CD4-positive, alpha-beta memory T cell (primary cell): ENCODE measurements at regions of chr4 and their contacts with region 1.

Region 1: GRCh38 chr4:108118490-108118889 is 50.2 kb downstream of the LEF1 start:
- DNase-seq: peak in 3 of 5 donors; percentile 23 to 83 (median 48)
- H3K4me3 ChIP-seq: no peak overlapping the region
- H3K4me3 Mint-ChIP-seq: peak overlapping the region in 7 of 8 donors; percentile 11 to 79 (median 75)
- H3K27ac ChIP-seq: peak overlapping the region; percentile 47
- H3K27ac Mint-ChIP-seq: peak overlapping the region; percentile 61 to 94 (median 87)
- H3K4me1 ChIP-seq: peaks cover 100% of the 10 kb centered on the region
- H3K4me1 Mint-ChIP-seq: peaks cover 77 to 93% (median 87%) of the 10 kb centered on the region in 4 donors
- H3K27me3 ChIP-seq: no peaks in the 10 kb centered on the region
- H3K27me3 Mint-ChIP-seq: no peaks in the 10 kb centered on the region

Region 2: DNA sequence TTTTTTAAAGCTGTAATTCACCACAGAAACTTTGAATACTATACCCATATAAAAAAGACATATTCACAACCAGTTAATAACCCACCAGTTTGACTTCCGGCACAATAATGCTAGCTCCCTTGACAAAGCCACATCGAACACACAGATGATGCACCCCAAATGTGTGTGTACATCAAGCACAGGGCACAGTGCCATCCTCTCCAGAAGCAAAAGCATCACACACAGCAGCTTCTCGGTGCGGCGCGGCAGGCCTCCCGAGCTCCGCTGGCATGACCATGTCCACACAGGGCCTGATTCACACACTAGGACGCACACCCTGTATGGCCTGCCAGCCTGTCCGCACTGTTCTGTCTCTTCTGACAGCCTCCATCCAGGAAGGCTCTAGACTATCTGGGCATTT is 37.7 kb before region 1 on chr4:
- CTCF ChIA-PET with region 1: no interaction called
- POLR2A ChIA-PET with region 1: interaction called, 3 read pairs
- intact Hi-C with region 1: loop called (anchors 5 kb)
- DNase-seq: peak; percentile 39 to 62 (median 48)
- H3K4me3 ChIP-seq: no peak overlapping the region
- H3K4me3 Mint-ChIP-seq: peak overlapping the region; percentile 61 to 83 (median 78)
- H3K27ac ChIP-seq: peak overlapping the region; percentile 23
- H3K27ac Mint-ChIP-seq: peak overlapping the region; percentile 82 to 94 (median 91)
- H3K4me1 ChIP-seq: peaks cover 35% of the 10 kb centered on the region
- H3K4me1 Mint-ChIP-seq: peaks cover 28 to 54% (median 45%) of the 10 kb centered on the region in 4 donors
- H3K27me3 ChIP-seq: no peaks in the 10 kb centered on the region
- H3K27me3 Mint-ChIP-seq: no peaks in the 10 kb centered on the region

Region 3: DNA sequence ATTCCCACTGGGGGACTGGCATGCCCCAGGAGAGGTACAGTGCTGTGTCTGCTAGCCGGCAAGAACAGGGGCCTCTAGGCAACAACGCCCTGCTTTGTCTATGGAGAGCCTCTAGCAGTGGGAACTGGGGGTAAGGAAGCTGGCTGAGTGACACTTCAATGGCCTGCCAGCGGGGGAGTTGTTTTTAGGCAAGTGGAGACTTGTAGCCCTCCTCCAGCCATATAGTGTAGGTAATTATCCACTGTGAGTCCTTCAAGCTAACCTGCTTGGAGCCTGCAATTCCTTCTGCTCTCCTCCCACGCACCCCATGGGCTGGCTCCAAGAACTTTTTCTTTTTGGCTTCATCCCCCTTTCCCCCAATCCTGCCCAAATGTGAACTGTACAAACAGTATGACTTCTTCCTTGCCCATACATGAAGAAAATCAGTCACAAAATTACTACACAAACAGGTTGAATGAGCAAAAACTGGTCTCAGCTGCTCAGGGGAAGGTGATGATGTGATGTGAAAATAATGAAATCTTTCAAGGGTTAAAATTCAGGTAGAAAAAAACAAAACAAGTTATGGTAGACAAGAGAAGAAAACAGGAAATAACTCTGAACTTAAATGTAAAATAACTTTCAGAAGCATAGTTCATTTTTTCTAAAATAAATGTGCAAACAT is 17.2 kb after region 1 on chr4:
- CTCF ChIA-PET with region 1: interaction called, 13 read pairs
- POLR2A ChIA-PET with region 1: interaction called, 159 read pairs
- intact Hi-C with region 1: loop called (anchors 2 kb)
- DNase-seq: no peak
- H3K4me3 ChIP-seq: peak overlapping the region in 1 of 2 donors; percentile 13
- H3K4me3 Mint-ChIP-seq: peak overlapping the region; percentile 38 to 82 (median 62)
- H3K27ac ChIP-seq: no peak overlapping the region
- H3K27ac Mint-ChIP-seq: peak overlapping the region; percentile 37 to 86 (median 75)
- H3K4me1 ChIP-seq: peaks cover 97% of the 10 kb centered on the region
- H3K4me1 Mint-ChIP-seq: peaks cover 54 to 91% (median 70%) of the 10 kb centered on the region in 4 donors
- H3K27me3 ChIP-seq: no peaks in the 10 kb centered on the region
- H3K27me3 Mint-ChIP-seq: no peaks in the 10 kb centered on the region

Region 4: GRCh38 chr4:108141213-108141950 is 22.9 kb after region 1 on chr4:
- CTCF ChIA-PET with region 1: interaction called, 3 read pairs
- POLR2A ChIA-PET with region 1: interaction called, 159 read pairs
- intact Hi-C with region 1: loop called (anchors 2 kb)
- DNase-seq: no peak
- H3K4me3 ChIP-seq: no peak overlapping the region
- H3K4me3 Mint-ChIP-seq: peak overlapping the region; percentile 32 to 84 (median 66)
- H3K27ac ChIP-seq: peak overlapping the region; percentile 6
- H3K27ac Mint-ChIP-seq: peak overlapping the region; percentile 44 to 87 (median 83)
- H3K4me1 ChIP-seq: peaks cover 100% of the 10 kb centered on the region
- H3K4me1 Mint-ChIP-seq: peaks cover 73 to 95% (median 82%) of the 10 kb centered on the region in 4 donors
- H3K27me3 ChIP-seq: no peaks in the 10 kb centered on the region
- H3K27me3 Mint-ChIP-seq: peaks cover 0 to 1% of the 10 kb centered on the region in 2 donors

Region 5: GRCh38 chr4:108160741-108161352 is 42.4 kb after region 1 on chr4:
- CTCF ChIA-PET with region 1: interaction called, 64 read pairs
- POLR2A ChIA-PET with region 1: interaction called, 460 read pairs
- intact Hi-C with region 1: loop called (anchors 1 kb)
- DNase-seq: peak; percentile 38 to 50 (median 47)
- H3K4me3 ChIP-seq: peak overlapping the region; percentile 19 to 81
- H3K4me3 Mint-ChIP-seq: peak overlapping the region; percentile 85 to 98 (median 88)
- H3K27ac ChIP-seq: peak overlapping the region; percentile 27
- H3K27ac Mint-ChIP-seq: peak overlapping the region; percentile 19 to 89 (median 75)
- H3K4me1 ChIP-seq: peaks cover 77% of the 10 kb centered on the region
- H3K4me1 Mint-ChIP-seq: peaks cover 30 to 84% (median 47%) of the 10 kb centered on the region in 4 donors
- H3K27me3 ChIP-seq: no peaks in the 10 kb centered on the region
- H3K27me3 Mint-ChIP-seq: no peaks in the 10 kb centered on the region

Region 6: DNA sequence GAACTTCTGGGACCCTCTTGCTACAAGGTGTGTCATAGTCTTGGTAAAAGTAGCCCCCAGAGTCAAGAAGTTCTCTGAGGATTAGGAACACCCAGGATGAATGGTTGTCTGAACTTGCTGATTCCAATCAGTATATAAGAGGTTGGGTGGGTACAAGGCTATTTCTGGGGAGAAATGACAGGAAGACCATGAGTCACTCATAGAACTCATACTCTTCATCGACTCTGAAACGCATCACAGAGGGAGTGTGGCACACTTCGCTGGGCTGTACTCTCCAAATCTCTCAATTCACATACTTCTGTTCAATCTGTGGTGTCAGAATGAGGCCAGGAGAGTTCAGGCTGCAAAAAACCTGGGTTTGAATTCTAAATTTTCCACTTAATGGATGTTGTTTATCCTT is 243.4 kb after region 1 on chr4:
- CTCF ChIA-PET with region 1: no interaction called
- POLR2A ChIA-PET with region 1: no interaction called
- intact Hi-C with region 1: no loop called
- DNase-seq: no peak
- H3K4me3 ChIP-seq: no peak overlapping the region
- H3K4me3 Mint-ChIP-seq: no peak overlapping the region
- H3K27ac ChIP-seq: no peak overlapping the region
- H3K27ac Mint-ChIP-seq: peak overlapping the region in 2 of 7 donors; percentile 4 to 41
- H3K4me1 ChIP-seq: peaks cover 51% of the 10 kb centered on the region
- H3K4me1 Mint-ChIP-seq: peaks cover 34 to 53% (median 44%) of the 10 kb centered on the region in 4 donors
- H3K27me3 ChIP-seq: no peaks in the 10 kb centered on the region
- H3K27me3 Mint-ChIP-seq: peaks cover 0 to 2% of the 10 kb centered on the region in 2 donors